Activated CD8-positive, alpha-beta T cell treated with anti-CD3 and anti-CD28 coated beads, Interleukin-2, amount 10 ng/mL, durations not matched to agents 7 days and 5 days (primary cell): ENCODE measurements at regions of chr2 and their contacts with region 1.

Region 1: GRCh38 chr2:64133828-64134227 is 10.4 kb downstream of the PELI1 start:
- DNase-seq: no peak
- ATAC-seq: no peak
- H3K4me3 Mint-ChIP-seq: no peak overlapping the region
- H3K27ac Mint-ChIP-seq: no peak overlapping the region
- H3K4me1 Mint-ChIP-seq: peaks cover 55% of the 10 kb centered on the region
- H3K27me3 Mint-ChIP-seq: no peaks in the 10 kb centered on the region

Region 2: GRCh38 chr2:64144057-64145013 is 10.5 kb after region 1 on chr2 and contains the start of gene PELI1:
- CTCF ChIA-PET with region 1: interaction called, 18 read pairs
- POLR2A ChIA-PET with region 1: interaction called, 3 read pairs
- DNase-seq: peak; percentile 95
- ATAC-seq: peak; percentile 90
- H3K4me3 Mint-ChIP-seq: peak within 1 kb of the TSS; percentile 97
- H3K27ac Mint-ChIP-seq: peak within 1 kb of the TSS; percentile 97
- H3K4me1 Mint-ChIP-seq: peaks cover 26% of the 10 kb centered on the region
- H3K27me3 Mint-ChIP-seq: no peaks in the 10 kb centered on the region
- total RNA-seq, gene PELI1: 21.1 to 21.9 TPM

Region 3: GRCh38 chr2:64311191-64311910 is 177.5 kb after region 1 on chr2:
- CTCF ChIA-PET with region 1: no interaction called
- POLR2A ChIA-PET with region 1: no interaction called
- DNase-seq: no peak
- ATAC-seq: no peak
- H3K4me3 Mint-ChIP-seq: no peak overlapping the region
- H3K27ac Mint-ChIP-seq: no peak overlapping the region
- H3K4me1 Mint-ChIP-seq: no peaks in the 10 kb centered on the region
- H3K27me3 Mint-ChIP-seq: peaks cover 12% of the 10 kb centered on the region